HCT116 (cell line): ENCODE measurements at regions of chr1 and their contacts with region 1.

Region 1: DNA sequence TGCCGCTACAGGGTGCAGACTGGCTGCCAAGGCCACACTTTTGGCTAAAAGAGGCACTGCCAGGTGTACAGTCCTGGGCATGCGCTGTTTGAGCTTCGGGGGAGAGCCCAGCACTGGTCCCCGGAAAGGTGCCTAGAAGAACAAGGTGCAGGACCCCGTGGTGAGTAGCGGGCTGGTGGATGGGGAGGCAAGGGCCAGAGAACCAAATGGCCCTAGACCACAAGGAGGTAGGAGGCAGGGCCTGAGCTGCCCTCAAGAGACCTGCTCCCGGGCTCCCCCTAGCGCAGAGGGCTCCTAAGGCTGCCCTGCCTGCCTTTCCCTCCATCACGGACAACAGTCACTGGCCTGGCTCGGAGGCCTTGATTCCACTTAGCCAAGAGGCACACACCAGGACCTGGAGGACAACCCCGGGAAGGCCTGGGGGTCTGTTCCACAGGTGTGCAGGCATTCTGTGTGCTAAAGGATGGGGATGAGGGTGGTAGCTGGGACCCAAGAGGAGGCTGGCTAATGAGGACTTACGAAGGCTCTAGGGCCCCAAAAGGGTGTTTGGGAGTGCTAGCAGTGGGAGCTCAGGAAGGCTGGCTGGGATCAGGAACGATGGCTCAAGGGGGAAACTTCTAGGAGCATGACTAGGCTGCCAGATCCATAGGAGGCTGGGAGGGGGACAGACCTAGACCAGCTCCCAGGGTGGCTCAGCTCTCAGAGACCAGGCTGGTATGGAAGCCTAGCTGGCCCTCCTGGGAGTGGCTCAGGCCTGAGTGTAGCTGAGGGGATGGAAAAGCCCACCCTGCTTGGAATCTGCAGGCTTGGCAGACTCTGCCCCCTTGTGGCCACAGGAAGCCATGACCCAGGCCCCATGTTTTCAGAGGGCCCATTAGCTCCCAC is 742 bp downstream of the ARTN start:
- DNase-seq: peak; percentile 68
- ATAC-seq: peak; percentile 74
- H3K4me3 ChIP-seq: peak overlapping the region; percentile 75 to 77
- H3K27ac ChIP-seq: peak overlapping the region; percentile 71
- H3K4me1 ChIP-seq: peaks cover 31 to 63% of the 10 kb centered on the region in 2 experiments
- H3K27me3 ChIP-seq: no peaks in the 10 kb centered on the region
- CTCF ChIP-seq: peak in 2 of 3 experiments; percentile 91 to 96; a peak in 4 of 6 replicates
- POLR2A ChIP-seq: peak; percentile 12
- RAD21 ChIP-seq: no peak

Region 2: GRCh38 chr1:43650310-43651085 is 283.8 kb before region 1 on chr1:
- CTCF ChIA-PET with region 1: interaction called, 13 read pairs
- POLR2A ChIA-PET with region 1: interaction called, 4 read pairs
- RAD21 ChIA-PET with region 1: interaction called in 1 of 2 experiments, 3 read pairs
- intact Hi-C with region 1: no loop called
- DNase-seq: peak; percentile 98
- ATAC-seq: peak; percentile 80
- H3K4me3 ChIP-seq: peak overlapping the region; percentile 62 to 86
- H3K27ac ChIP-seq: peak overlapping the region; percentile 83
- H3K4me1 ChIP-seq: peaks cover 7 to 26% of the 10 kb centered on the region in 2 experiments; a peak in 3 of 4 replicates
- H3K27me3 ChIP-seq: no peaks in the 10 kb centered on the region
- CTCF ChIP-seq: no peak
- POLR2A ChIP-seq: peak; percentile 99
- RAD21 ChIP-seq: no peak

Region 3: GRCh38 chr1:43763497-43763973 is 170.8 kb before region 1 on chr1:
- CTCF ChIA-PET with region 1: interaction called, 479 read pairs
- POLR2A ChIA-PET with region 1: interaction called, 45 read pairs
- RAD21 ChIA-PET with region 1: interaction called, 85 to 109 read pairs
- intact Hi-C with region 1: loop called (anchors 1 kb)
- DNase-seq: peak; percentile 87
- ATAC-seq: peak; percentile 98
- H3K4me3 ChIP-seq: no peak overlapping the region
- H3K27ac ChIP-seq: no peak overlapping the region
- H3K4me1 ChIP-seq: peaks cover 0 to 21% of the 10 kb centered on the region in 2 experiments; a peak in 3 of 4 replicates
- H3K27me3 ChIP-seq: no peaks in the 10 kb centered on the region
- CTCF ChIP-seq: peak; percentile 76 to 98 (median 91)
- POLR2A ChIP-seq: no peak
- RAD21 ChIP-seq: peak; percentile 100

Region 4: DNA sequence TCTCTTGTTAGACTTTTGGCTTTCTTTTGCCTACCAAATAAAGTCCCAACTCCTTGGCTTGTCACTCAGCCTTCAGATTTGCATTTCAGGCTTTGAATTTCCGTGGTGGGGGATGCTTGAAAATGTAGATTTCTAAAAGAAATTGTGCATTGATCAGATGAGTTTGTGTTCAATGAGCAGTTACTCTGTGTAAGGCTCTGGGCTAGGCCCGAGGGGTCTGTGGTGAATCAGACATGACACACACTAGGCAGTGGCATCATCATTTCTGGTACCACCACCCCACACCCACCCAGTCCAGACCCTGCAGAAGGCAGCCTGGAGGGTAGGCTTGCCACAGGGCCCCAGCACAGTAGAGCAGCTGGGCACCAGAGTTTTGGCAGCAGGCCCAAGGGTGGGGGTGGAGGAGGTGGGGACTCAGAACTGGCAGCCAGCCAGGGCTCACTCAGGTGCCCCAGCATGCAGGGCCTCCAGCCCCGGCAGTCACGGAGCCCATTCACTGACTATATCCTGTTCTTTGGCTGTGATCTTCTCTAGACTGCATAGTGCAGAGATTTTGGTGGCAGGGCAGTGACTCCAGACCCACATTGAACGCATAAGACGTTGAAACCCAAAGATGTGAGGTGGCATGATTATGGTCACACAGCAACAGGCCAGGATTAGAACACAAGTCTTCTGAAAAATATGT is 97.9 kb before region 1 on chr1:
- CTCF ChIA-PET with region 1: interaction called, 10 read pairs
- POLR2A ChIA-PET with region 1: no interaction called
- RAD21 ChIA-PET with region 1: no interaction called
- intact Hi-C with region 1: loop called (anchors 5 kb)
- DNase-seq: no peak
- ATAC-seq: peak; percentile 35
- H3K4me3 ChIP-seq: no peak overlapping the region
- H3K27ac ChIP-seq: 0 out of 2 replicates have a peak overlapping the region, but pooled peaks have one; percentile 23
- H3K4me1 ChIP-seq: peaks cover 37 to 40% of the 10 kb centered on the region in 2 experiments
- H3K27me3 ChIP-seq: no peaks in the 10 kb centered on the region
- CTCF ChIP-seq: no peak
- POLR2A ChIP-seq: no peak
- RAD21 ChIP-seq: 0 out of 2 replicates have a peak, but pooled peaks have one; percentile 3

Region 5: GRCh38 chr1:43946236-43947060 is 12.1 kb after region 1 on chr1 and contains the start of gene IPO13:
- CTCF ChIA-PET with region 1: interaction called, 130 read pairs
- POLR2A ChIA-PET with region 1: interaction called, 9 read pairs
- RAD21 ChIA-PET with region 1: interaction called, 4 to 9 read pairs
- intact Hi-C with region 1: no loop called
- DNase-seq: peak; percentile 93
- ATAC-seq: peak; percentile 95
- H3K4me3 ChIP-seq: peak within 1 kb of the TSS; percentile 77 to 97
- H3K27ac ChIP-seq: peak within 1 kb of the TSS; percentile 88
- H3K4me1 ChIP-seq: peaks cover 10 to 23% of the 10 kb centered on the region in 2 experiments; a peak in 3 of 4 replicates
- H3K27me3 ChIP-seq: no peaks in the 10 kb centered on the region
- CTCF ChIP-seq: peak; percentile 72 to 84 (median 76)
- POLR2A ChIP-seq: peak; percentile 53
- RAD21 ChIP-seq: peak; percentile 90
- total RNA-seq, gene IPO13: 18.7 TPM

Region 6: GRCh38 chr1:44025816-44026215 is 91.5 kb after region 1 on chr1:
- CTCF ChIA-PET with region 1: no interaction called
- POLR2A ChIA-PET with region 1: no interaction called
- RAD21 ChIA-PET with region 1: no interaction called
- intact Hi-C with region 1: no loop called
- DNase-seq: no peak
- ATAC-seq: no peak
- H3K4me3 ChIP-seq: no peak overlapping the region
- H3K27ac ChIP-seq: no peak overlapping the region
- H3K4me1 ChIP-seq: peaks cover 20 to 34% of the 10 kb centered on the region in 2 experiments
- H3K27me3 ChIP-seq: no peaks in the 10 kb centered on the region
- CTCF ChIP-seq: no peak
- POLR2A ChIP-seq: no peak
- RAD21 ChIP-seq: no peak

Region 7: GRCh38 chr1:44220001-44220733 is 285.8 kb after region 1 on chr1:
- CTCF ChIA-PET with region 1: no interaction called
- POLR2A ChIA-PET with region 1: no interaction called
- RAD21 ChIA-PET with region 1: no interaction called
- intact Hi-C with region 1: no loop called
- DNase-seq: no peak
- ATAC-seq: no peak
- H3K4me3 ChIP-seq: no peak overlapping the region
- H3K27ac ChIP-seq: no peak overlapping the region
- H3K4me1 ChIP-seq: peaks cover 0 to 5% of the 10 kb centered on the region in 2 experiments; a peak in 1 of 4 replicates
- H3K27me3 ChIP-seq: no peaks in the 10 kb centered on the region
- CTCF ChIP-seq: no peak
- POLR2A ChIP-seq: no peak
- RAD21 ChIP-seq: no peak